ENCODE measurements at regions of chr7 and their contacts with region 1.

Region 1: DNA sequence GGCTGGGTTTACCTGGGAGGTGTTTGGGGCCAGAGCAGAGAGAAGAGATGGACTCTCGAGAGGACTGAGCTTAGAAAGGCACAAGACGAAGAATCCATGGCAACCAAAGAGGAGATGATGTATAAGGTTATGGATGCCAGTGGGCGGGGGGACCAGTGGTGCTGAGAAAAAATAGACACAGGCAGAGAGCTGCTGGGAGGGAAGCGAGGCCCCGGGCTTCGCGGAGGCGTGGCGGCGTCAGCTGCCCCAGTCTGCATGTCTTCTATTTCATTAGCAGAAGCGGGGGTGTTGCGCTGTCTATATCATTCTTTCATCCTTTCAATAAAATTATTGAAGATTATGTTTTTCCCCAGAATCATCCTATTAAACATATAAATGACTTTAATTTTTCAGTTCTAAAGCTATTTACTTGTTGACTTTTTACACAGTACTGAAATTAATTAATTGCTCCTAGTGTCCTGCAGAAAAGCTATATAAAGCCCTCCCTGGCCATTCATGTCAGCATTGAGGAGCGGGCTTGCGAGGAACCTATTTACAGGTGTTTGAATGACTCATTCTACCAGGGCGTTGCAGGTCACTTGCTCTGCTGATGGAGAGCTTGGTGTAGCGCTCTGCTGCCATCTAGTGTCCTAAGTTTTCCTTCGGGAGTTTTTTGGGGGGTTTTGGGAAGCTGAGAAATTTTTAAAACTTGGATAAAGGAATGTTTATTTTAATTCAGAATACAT is 42.9 kb upstream of the BHLHA15 start:
- DNase-seq: peak in 1 of 2 donors; percentile 61
- ATAC-seq: peak; percentile 71
- H3K4me3 ChIP-seq: no peak overlapping the region
- H3K27ac ChIP-seq: no peak overlapping the region
- H3K4me1 ChIP-seq: no peaks in the 10 kb centered on the region
- H3K27me3 ChIP-seq: no peaks in the 10 kb centered on the region

Region 2: GRCh38 chr7:97117372-97118188 is 1050.8 kb before region 1 on chr7 and contains the start of gene SDHAF3:
- intact Hi-C with region 1: loop called in 1 of 2 experiments (anchors 10 kb)
- DNase-seq: peak; percentile 99
- ATAC-seq: peak; percentile 99
- H3K4me3 ChIP-seq: peak within 1 kb of the TSS; percentile 49 to 69
- H3K27ac ChIP-seq: peak within 1 kb of the TSS in 1 of 2 donors; percentile 19
- H3K4me1 ChIP-seq: no peaks in the 10 kb centered on the region
- H3K27me3 ChIP-seq: no peaks in the 10 kb centered on the region
- total RNA-seq, gene SDHAF3: 6.5 to 7.8 TPM

Region 3: DNA sequence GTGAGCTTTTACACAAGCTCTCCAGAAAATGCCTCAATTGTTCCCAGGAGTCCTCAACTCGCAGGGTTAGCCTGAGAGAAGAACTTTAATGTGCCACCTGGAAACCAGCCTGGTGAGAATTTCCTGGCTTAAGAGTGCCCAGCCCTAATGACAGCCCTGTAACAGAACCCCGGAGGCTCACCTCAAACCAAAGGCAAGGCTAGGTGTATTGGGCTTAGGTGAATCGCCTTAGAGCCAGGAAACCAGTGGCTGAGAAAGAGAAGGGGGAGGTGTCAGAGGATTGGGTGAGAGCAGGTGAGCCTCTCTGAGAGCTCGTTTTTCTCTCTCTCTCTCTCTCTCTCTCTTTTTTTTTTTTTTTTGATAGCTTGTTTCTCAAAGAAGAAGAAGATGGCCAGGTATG is 185.7 kb before region 1 on chr7:
- intact Hi-C with region 1: no loop called
- DNase-seq: no peak
- ATAC-seq: no peak
- H3K4me3 ChIP-seq: no peak overlapping the region
- H3K27ac ChIP-seq: no peak overlapping the region
- H3K4me1 ChIP-seq: no peaks in the 10 kb centered on the region
- H3K27me3 ChIP-seq: no peaks in the 10 kb centered on the region

Region 4: DNA sequence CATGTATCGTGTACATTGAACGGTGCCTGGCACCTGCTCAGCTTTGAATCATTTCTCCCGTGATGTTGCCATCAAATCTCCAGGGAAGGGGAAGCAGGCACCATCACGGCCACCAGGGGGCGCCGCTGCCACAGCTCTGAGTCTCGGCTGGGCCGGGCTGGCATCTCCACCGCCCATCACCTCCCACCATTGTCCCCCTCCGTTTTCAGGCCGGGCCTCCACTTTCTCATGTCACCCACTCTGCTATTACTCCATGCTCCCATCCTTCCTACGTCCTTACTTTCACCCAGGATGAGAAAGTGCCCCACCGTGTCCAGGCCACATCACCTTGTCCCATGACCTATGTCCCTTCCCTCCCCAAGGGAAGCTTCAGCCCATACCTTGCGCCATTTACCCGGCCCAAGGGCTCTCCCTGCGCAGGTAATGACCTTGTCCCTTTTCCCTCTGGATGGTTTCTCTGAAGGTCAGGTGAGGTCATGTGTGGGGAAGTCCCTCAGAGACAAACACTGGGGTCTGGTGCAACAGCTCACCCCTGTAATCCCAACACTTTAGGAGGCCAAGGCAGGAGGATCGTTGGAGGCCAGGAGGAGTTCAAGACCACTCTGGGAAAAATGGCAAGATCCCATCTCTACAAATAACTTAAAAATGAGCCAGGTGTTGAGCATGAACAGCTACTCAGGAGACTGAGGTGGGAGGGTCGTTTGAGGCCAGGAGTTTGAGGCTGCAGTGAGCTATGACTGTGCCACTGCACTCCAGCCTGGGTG is 146.6 kb before region 1 on chr7:
- intact Hi-C with region 1: loop called (anchors 2 to 5 kb)
- DNase-seq: peak; percentile 75 to 93
- ATAC-seq: peak; percentile 62
- H3K4me3 ChIP-seq: no peak overlapping the region
- H3K27ac ChIP-seq: no peak overlapping the region
- H3K4me1 ChIP-seq: no peaks in the 10 kb centered on the region
- H3K27me3 ChIP-seq: no peaks in the 10 kb centered on the region

Region 5: GRCh38 chr7:98106647-98107445 is 61.5 kb before region 1 on chr7 and contains the start of gene LMTK2:
- intact Hi-C with region 1: loop called (anchors 2 to 5 kb)
- DNase-seq: peak; percentile 95 to 98
- ATAC-seq: peak; percentile 100
- H3K4me3 ChIP-seq: peak within 1 kb of the TSS; percentile 97 to 98
- H3K27ac ChIP-seq: peak within 1 kb of the TSS in 1 of 2 donors; percentile 73
- H3K4me1 ChIP-seq: no peaks in the 10 kb centered on the region
- H3K27me3 ChIP-seq: no peaks in the 10 kb centered on the region
- total RNA-seq, gene LMTK2: 13.6 to 16.6 TPM

Measured in aorta (tissue), 5 donors.